Lower lobe of right lung (tissue), 2 donors: ENCODE measurements at regions of chr6 and their contacts with region 1.

Region 1: DNA sequence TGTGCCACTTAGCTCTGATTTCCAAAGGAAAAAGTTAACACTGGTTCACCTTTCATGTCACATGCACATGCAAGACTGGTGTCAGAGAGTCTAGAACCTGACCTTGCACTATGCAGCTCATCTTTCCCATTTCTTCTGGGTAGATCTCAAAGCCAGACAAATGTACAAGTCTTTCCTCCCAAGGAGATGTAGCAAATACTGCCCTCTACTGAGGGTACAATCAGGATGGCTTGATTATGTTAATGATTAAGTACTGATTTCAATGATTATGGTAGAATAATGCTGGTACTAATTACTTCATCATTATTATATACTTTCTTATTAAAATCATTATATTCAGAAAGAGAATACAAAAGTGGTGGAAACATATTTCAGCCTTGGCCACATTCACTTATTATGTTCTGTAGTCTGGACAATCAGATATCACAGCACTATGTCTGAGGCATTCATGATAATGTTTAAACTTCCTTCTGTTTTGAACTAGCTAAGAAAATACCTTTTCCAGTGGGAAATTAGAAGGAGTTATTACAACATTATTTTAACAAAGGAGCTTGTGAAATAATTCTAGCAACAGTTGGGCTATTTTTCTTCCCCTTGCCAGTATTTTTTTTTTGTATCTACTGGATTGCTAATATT is 68.5 kb upstream of the FOXO3 start:
- DNase-seq: no peak
- ATAC-seq: peak; percentile 64 to 68
- H3K4me3 ChIP-seq: no peak overlapping the region
- H3K27ac ChIP-seq: no peak overlapping the region
- H3K4me1 ChIP-seq: no peaks in the 10 kb centered on the region
- H3K27me3 ChIP-seq: no peaks in the 10 kb centered on the region
- CTCF ChIP-seq: peak; percentile 67

Region 2: GRCh38 chr6:108113557-108114519 is 378.4 kb before region 1 on chr6:
- intact Hi-C with region 1: loop called (anchors 10 kb)
- DNase-seq: peak; percentile 46
- ATAC-seq: peak in 1 of 2 donors; percentile 43
- H3K4me3 ChIP-seq: peak overlapping the region; percentile 54
- H3K27ac ChIP-seq: no peak overlapping the region
- H3K4me1 ChIP-seq: peaks cover 43% of the 10 kb centered on the region
- H3K27me3 ChIP-seq: peaks cover 82% of the 10 kb centered on the region
- CTCF ChIP-seq: peak; percentile 47

Region 3: DNA sequence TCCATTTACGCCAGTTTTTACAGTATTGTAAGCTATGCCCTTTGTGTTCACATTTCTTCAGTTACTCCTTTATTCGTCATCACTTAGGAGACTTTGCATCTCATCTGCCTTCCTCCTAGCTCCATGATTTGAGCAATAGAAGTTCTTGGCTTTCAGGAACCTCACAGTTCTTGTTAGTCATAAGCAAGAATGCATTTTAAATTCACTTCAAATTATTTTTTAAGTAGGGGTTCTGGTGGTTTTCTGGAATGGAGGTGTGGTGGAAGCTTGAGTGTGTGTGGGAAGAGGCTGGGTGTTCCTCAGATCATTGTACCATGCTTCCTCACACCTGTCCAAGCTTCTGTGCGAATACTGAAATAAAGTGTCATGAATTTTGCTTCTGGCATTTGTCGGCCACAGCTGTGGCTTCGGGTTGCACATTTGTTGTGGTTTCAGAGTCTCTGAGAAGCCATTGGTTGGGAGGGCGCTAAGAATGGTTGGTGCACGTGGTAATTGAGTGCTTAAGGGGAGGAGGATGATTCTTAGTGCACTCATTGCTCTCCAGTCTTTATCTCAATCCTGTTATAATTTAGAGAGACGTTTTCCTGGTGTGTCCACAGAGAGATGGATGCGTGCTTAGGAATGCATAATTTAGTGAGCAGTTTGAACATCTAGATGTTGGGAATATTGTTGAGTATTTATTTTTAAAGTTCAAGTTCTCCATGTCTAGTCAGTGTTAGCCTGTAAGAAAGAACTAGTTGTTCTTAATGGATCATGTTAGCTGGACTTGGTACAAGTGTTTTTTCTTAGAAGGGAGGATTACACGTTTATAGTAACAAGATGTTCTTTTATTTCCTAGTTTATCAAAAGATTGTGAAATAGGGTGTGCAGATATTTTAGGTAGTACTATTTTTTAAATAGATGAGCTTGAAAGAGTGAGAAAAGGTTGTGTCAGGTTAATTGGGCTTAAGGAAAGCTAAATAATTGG is 100.4 kb after region 1 on chr6:
- intact Hi-C with region 1: no loop called
- DNase-seq: no peak
- ATAC-seq: peak; percentile 16 to 20
- H3K4me3 ChIP-seq: no peak overlapping the region
- H3K27ac ChIP-seq: peak overlapping the region; percentile 92
- H3K4me1 ChIP-seq: peaks cover 100% of the 10 kb centered on the region
- H3K27me3 ChIP-seq: no peaks in the 10 kb centered on the region
- CTCF ChIP-seq: no peak

Region 4: GRCh38 chr6:108872141-108872557 is 379.9 kb after region 1 on chr6:
- intact Hi-C with region 1: no loop called
- DNase-seq: no peak
- ATAC-seq: peak; percentile 69 to 74
- H3K4me3 ChIP-seq: no peak overlapping the region
- H3K27ac ChIP-seq: peak overlapping the region; percentile 71
- H3K4me1 ChIP-seq: peaks cover 63% of the 10 kb centered on the region
- H3K27me3 ChIP-seq: no peaks in the 10 kb centered on the region
- CTCF ChIP-seq: no peak